ENCODE measurements at regions of chr6 and their contacts with region 1.

Region 1: GRCh38 chr6:44475779-44476434 is 88.4 kb downstream of the CDC5L start:
- DNase-seq: peak; percentile 79 to 90
- H3K4me3 ChIP-seq: no peak overlapping the region
- H3K4me3 Mint-ChIP-seq: no peak overlapping the region
- H3K27ac Mint-ChIP-seq: no peak overlapping the region
- H3K4me1 ChIP-seq: peaks cover 13% of the 10 kb centered on the region
- H3K4me1 Mint-ChIP-seq: peaks cover 12% of the 10 kb centered on the region
- H3K27me3 ChIP-seq: no peaks in the 10 kb centered on the region
- H3K27me3 Mint-ChIP-seq: peaks cover 3% of the 10 kb centered on the region
- CTCF ChIP-seq: peak; percentile 83 to 94

Region 2: DNA sequence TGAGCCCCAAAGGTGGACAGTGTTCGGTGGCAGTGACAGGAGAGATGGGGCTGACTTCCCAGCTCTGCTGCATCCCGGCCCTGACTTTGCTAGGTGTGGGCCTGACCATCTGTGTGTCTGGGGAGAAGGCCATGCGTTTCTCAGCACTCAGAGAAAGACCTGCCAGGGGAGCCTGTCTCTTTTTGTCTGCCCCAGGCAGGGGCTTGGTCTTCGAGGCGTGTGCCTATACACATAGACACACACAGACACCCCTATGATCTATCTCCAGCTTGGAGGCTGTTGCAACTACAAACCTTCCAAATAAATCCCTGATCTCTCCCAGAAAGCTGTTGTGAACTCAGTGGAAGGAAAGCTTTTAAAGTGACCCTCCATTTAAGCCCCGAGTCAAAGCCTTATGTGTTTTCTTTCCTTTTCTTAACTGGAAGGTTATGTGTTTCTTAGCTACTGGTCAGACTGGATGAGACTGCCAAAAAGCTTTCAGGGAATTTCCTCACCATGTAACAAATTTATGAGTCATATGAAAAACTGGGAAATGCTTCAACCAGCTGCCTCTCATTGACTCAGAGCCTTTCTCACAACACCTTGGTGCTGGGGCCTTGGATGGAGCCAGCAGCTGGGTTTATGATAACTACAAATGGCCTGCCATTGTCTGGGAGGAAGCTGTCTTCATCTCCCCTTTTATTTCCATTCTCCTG is 14.2 kb after region 1 on chr6:
- CTCF ChIA-PET with region 1: interaction called, 10 read pairs
- POLR2A ChIA-PET with region 1: no interaction called
- intact Hi-C with region 1: loop called (anchors 1 kb)
- DNase-seq: no peak
- H3K4me3 ChIP-seq: no peak overlapping the region
- H3K4me3 Mint-ChIP-seq: no peak overlapping the region
- H3K27ac Mint-ChIP-seq: no peak overlapping the region
- H3K4me1 ChIP-seq: no peaks in the 10 kb centered on the region
- H3K4me1 Mint-ChIP-seq: no peaks in the 10 kb centered on the region
- H3K27me3 ChIP-seq: no peaks in the 10 kb centered on the region; the same call in 1 of the 2 replicates
- H3K27me3 Mint-ChIP-seq: peaks cover 14% of the 10 kb centered on the region
- CTCF ChIP-seq: no peak

Region 3: DNA sequence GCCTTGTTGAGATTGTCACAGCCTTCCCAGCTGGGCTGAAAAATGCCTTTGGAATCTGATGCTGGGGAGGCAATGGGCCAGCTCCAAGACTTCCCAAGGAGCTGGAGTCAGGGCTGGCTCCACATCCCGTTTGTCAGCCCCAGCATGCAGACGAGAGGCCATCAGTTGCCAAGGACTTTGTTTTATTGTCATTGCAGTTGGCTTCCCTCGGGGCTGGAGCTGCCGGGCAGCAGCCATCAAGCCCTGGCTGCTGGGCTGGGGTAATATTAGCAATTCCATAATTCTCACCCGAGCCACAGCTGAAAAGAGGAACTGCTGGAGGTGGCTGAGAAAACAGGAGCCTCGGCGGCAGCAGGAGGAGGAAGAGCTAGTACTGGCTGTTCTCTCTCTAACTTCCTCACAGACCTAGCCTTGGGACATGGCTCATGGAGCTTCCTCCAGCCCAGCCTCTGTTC is 94.1 kb after region 1 on chr6:
- CTCF ChIA-PET with region 1: interaction called, 5 read pairs
- POLR2A ChIA-PET with region 1: no interaction called
- intact Hi-C with region 1: loop called (anchors 10 kb)
- DNase-seq: no peak
- H3K4me3 ChIP-seq: no peak overlapping the region
- H3K4me3 Mint-ChIP-seq: no peak overlapping the region
- H3K27ac Mint-ChIP-seq: no peak overlapping the region
- H3K4me1 ChIP-seq: no peaks in the 10 kb centered on the region
- H3K4me1 Mint-ChIP-seq: no peaks in the 10 kb centered on the region
- H3K27me3 ChIP-seq: no peaks in the 10 kb centered on the region
- H3K27me3 Mint-ChIP-seq: peaks cover 13% of the 10 kb centered on the region
- CTCF ChIP-seq: no peak

Region 4: DNA sequence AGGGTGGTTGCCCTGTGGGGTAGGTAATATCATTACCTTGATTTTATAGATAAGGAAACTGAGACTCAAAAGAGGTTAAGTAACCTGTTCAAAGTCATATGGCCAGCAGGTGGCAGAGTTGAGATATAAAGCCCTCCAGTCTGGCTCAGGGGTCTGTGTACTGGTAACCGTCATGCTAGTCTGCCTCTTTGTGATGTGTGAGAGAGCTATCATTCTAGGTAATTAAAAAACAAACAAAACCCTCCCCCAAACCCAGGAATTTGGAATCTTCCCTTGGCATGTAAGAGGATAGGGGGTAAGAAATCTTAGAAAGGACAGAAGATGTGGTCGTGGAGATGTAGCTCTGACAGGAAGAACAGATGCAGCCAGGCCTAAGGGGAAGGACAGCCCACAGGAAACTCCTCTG is 117.6 kb after region 1 on chr6:
- CTCF ChIA-PET with region 1: interaction called, 13 read pairs
- POLR2A ChIA-PET with region 1: no interaction called
- intact Hi-C with region 1: no loop called
- DNase-seq: peak; percentile 47 to 58
- H3K4me3 ChIP-seq: no peak overlapping the region
- H3K4me3 Mint-ChIP-seq: no peak overlapping the region
- H3K27ac Mint-ChIP-seq: no peak overlapping the region
- H3K4me1 ChIP-seq: no peaks in the 10 kb centered on the region
- H3K4me1 Mint-ChIP-seq: peaks cover 6% of the 10 kb centered on the region
- H3K27me3 ChIP-seq: no peaks in the 10 kb centered on the region
- H3K27me3 Mint-ChIP-seq: peaks cover 5% of the 10 kb centered on the region
- CTCF ChIP-seq: peak; percentile 30 to 58

Region 5: DNA sequence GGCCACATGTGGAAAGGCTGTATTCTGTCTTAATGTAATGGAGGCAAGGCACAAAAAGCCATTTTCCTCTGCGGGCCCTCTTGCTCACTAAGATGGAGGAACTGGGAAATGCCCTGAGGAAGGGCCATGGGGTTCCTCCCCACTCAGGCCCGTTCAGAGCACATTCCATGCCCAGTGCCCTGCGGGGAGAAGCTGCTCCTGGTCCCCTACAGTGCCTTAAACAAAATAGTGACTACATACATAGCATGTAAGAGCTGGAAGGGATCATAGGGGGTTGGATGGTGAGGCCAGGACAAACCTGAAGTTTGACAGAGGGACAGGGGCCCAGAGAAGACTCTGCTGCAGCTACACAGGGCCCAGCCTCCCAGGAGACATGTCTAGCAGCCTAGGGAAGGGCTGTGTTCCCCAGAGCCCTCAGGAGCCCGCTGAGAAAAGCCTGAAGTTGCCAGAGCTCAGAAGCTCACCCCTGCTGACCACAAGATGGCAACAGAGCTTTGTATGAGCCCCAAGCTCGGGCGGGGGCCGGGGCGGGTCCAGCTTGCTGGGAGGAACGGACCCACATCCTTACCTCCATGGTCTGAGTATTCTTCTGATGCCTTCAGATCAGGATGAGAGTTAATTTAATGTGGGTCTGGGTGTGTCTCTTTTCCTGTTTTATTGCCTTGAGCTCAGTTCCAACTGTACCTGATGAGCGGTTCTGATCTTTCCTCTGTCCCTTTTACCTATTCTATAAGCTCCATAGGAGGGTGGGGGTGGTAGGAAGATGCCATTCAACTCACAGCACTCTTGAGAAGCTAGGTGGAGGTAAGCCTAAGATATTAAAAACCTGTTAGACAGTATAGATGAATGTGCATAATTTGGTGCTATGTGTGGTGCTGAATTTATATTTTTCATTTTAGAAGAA is 154.5 kb after region 1 on chr6:
- CTCF ChIA-PET with region 1: interaction called, 25 read pairs
- POLR2A ChIA-PET with region 1: no interaction called
- intact Hi-C with region 1: loop called (anchors 5 kb)
- DNase-seq: peak; percentile 55 to 60
- H3K4me3 ChIP-seq: no peak overlapping the region
- H3K4me3 Mint-ChIP-seq: no peak overlapping the region
- H3K27ac Mint-ChIP-seq: no peak overlapping the region
- H3K4me1 ChIP-seq: no peaks in the 10 kb centered on the region
- H3K4me1 Mint-ChIP-seq: peaks cover 9% of the 10 kb centered on the region
- H3K27me3 ChIP-seq: no peaks in the 10 kb centered on the region; the same call in 1 of the 2 replicates
- H3K27me3 Mint-ChIP-seq: peaks cover 11% of the 10 kb centered on the region
- CTCF ChIP-seq: peak; percentile 33 to 83

Region 6: GRCh38 chr6:44655412-44656342 is 179.8 kb after region 1 on chr6:
- CTCF ChIA-PET with region 1: interaction called, 13 read pairs
- POLR2A ChIA-PET with region 1: no interaction called
- intact Hi-C with region 1: loop called (anchors 5 kb)
- DNase-seq: peak; percentile 70 to 80
- H3K4me3 ChIP-seq: no peak overlapping the region
- H3K4me3 Mint-ChIP-seq: peak overlapping the region; percentile 30
- H3K27ac Mint-ChIP-seq: peak overlapping the region; percentile 8
- H3K4me1 ChIP-seq: 0 out of 2 replicates have a peak, but pooled peaks cover 4% of the 10 kb centered on the region
- H3K4me1 Mint-ChIP-seq: peaks cover 15% of the 10 kb centered on the region
- H3K27me3 ChIP-seq: no peaks in the 10 kb centered on the region
- H3K27me3 Mint-ChIP-seq: peaks cover 4% of the 10 kb centered on the region
- CTCF ChIP-seq: peak; percentile 86 to 92

Region 7: GRCh38 chr6:45922728-45923351 is 1446.9 kb after region 1 on chr6:
- CTCF ChIA-PET with region 1: interaction called, 5 read pairs
- POLR2A ChIA-PET with region 1: no interaction called
- intact Hi-C with region 1: loop called (anchors 10 kb)
- DNase-seq: peak; percentile 43 to 64
- H3K4me3 ChIP-seq: no peak overlapping the region
- H3K4me3 Mint-ChIP-seq: no peak overlapping the region
- H3K27ac Mint-ChIP-seq: no peak overlapping the region
- H3K4me1 ChIP-seq: peaks cover 4% of the 10 kb centered on the region; the same call in 1 of the 2 replicates
- H3K4me1 Mint-ChIP-seq: peaks cover 6% of the 10 kb centered on the region
- H3K27me3 ChIP-seq: no peaks in the 10 kb centered on the region
- H3K27me3 Mint-ChIP-seq: no peaks in the 10 kb centered on the region
- CTCF ChIP-seq: peak; percentile 35 to 58

Measured in Caco-2 (cell line).